ENCODE measurements at regions of chr16 and their contacts with region 1.

Region 1: DNA sequence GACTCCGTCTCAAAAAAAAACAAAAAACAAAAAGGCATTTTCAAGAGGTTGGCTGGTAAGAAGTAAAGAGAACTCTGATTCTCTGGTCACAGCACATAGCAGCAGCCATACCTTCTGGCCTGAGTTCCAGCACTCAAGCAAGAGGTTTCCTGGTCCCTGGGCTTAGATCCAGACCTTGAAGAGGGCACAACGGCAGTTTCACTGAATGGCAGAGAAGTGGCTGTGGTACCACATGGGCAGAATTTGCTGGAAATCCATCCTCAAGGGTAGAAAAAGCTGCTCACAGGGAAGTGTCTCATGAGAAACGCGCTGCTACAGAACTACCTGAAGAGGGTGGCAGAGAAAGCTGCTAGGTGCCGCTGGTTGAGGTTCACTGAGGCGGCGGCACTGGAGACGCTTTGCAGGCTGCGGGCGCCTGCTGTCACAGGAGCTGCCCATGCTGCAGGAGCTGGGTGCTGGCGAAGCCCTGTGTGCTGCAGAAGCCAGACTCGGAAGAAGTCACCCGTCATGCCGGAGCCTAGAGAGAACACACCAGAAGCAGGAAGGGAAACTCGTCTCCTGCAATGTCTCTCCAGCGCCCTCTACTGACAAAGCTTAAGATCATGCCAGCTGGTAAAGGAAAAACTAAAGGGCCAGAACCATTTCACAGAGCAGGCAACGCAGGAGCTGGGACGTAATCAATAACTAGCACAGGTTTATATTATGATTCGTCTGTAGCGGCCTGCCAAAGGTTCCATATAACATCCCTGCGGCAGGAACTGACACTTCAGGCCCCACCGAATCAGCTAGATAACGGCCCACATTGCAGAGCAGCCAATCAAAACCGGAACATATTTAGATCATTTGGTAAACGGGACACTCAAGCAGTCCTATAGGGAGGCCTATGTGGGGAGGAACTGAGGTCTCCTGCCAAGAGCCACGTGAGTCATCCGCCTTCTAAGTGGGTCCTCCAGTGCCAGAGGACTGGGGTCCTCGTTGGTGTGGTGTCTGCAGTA is 5.4 kb upstream of the ZNF213 start:
- DNase-seq: peak; percentile 62 to 84
- ATAC-seq: peak; percentile 68 to 81 (median 79)
- H3K4me3 ChIP-seq: peak overlapping the region in 9 of 10 donors; percentile 27 to 66 (median 59)
- H3K27ac ChIP-seq: peak overlapping the region in 9 of 10 donors; percentile 57 to 92 (median 80)
- H3K4me1 ChIP-seq: peaks cover 3 to 51% (median 38%) of the 10 kb centered on the region in 9 donors
- H3K27me3 ChIP-seq: no peaks in the 10 kb centered on the region
- CTCF ChIP-seq: peak; percentile 81 to 96 (median 94)

Region 2: DNA sequence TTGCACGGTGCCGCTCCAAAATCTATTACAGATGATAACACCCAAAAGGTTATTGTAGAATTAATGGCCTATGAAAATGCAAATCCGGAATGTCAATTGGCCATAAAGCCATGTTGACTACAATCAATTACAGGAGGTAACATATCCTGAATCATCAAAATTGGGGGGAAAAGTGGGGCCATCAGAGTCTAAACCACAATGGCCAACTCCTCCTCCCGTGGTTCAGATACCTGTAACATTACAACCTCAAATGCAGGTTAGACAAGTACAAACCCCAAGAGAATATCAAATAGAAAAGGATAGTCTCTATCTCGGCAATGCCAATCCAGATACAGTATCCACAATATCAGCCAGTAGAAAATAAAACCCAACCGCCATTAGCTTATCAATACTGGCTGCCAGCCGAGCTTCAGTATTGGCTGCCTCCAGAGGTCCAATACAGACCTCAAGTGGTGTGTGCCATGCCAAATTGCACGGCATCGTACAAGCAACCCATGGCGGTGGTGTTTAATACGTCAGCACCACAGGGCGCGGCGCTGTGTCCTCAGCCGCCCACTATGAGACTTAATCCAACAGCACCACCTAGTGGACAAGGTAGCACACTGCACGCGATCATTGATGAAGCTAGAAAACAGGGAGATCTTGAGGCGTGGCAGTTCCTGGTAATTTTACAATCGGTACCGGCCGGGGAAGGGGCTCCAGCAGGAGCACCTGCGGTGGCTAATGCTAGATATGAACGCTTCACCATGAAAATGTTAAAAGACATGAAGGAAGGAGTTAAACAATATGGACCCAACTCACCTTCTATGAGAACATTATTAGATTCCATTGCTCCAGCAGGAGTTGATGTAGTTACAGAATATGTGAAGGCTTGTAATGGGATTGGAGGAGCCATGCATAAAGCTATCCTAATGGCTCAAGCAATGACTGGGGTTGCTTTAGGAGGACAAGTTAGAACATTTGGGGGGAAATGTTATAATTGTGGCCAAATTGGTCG is 202.5 kb before region 1 on chr16:
- intact Hi-C with region 1: no loop called
- DNase-seq: peak; percentile 82 to 84
- ATAC-seq: peak; percentile 80 to 93 (median 89)
- H3K4me3 ChIP-seq: peak overlapping the region in 6 of 10 donors; percentile 22 to 33 (median 30)
- H3K27ac ChIP-seq: no peak overlapping the region
- H3K4me1 ChIP-seq: peaks cover 0 to 11% (median 9%) of the 10 kb centered on the region in 9 donors
- H3K27me3 ChIP-seq: no peaks in the 10 kb centered on the region
- CTCF ChIP-seq: peak; percentile 93 to 99 (median 95)

Region 3: DNA sequence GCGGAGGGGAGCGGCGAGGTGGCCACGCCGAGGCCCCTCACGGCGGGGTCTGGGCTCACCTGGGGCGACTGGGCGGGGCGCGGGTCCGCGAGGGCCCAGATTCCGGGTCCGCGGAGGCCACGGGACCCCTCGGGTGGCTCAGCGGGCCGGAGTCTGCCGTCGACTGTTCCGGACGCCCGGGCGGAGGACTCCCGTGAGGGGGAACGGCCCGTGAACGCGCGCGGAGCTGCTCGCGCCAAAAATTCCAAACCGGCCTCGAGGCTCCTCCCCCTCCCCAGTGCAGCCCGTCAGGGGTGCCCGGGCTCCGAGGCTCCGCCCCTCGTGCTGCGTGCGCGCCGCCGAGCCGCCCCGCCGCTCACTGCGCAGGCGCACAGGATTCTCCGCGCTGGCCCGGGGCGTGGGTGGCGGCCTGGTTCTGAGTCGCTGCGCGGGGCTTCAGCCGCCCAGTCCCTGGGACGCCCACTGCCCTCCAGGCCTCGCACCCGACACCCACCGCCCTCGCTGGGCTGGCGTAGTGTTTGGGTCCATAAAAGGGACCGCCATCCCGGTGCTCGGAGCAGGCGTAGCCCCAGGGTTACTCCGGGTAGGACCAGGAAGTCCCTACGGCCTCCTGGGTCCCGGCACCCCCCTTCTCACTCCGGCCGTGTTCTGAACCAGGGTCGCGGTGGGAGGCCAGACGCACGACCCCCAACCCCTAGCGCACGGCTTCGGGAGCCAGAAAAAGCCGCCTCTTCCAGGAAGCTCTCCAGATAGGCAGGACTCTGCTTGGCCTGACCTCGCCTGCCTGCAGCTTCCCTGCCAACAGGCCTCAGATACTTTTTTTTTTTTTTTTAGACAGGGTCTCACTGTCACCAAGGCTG is 149.0 kb before region 1 on chr16 and contains the start of gene PKMYT1:
- intact Hi-C with region 1: no loop called
- DNase-seq: peak; percentile 89 to 94
- ATAC-seq: peak; percentile 94 to 98 (median 95)
- H3K4me3 ChIP-seq: peak within 1 kb of the TSS; percentile 54 to 89 (median 80)
- H3K27ac ChIP-seq: peak within 1 kb of the TSS; percentile 9 to 97 (median 88)
- H3K4me1 ChIP-seq: peaks cover 2 to 39% (median 28%) of the 10 kb centered on the region in 9 donors
- H3K27me3 ChIP-seq: peaks cover 0 to 12% (median 7%) of the 10 kb centered on the region in 7 donors
- CTCF ChIP-seq: no peak
- total RNA-seq, gene PKMYT1: 0.34 to 4.2 (median 0.66) TPM in 9 of 10 donors, not detected in the other

Region 4: GRCh38 chr16:3094289-3095027 is 35.0 kb before region 1 on chr16:
- intact Hi-C with region 1: loop called in 1 of 10 experiments (anchors 2 kb)
- DNase-seq: no peak
- ATAC-seq: no peak
- H3K4me3 ChIP-seq: no peak overlapping the region
- H3K27ac ChIP-seq: no peak overlapping the region
- H3K4me1 ChIP-seq: peaks cover 0 to 21% (median 3%) of the 10 kb centered on the region in 9 donors
- H3K27me3 ChIP-seq: peaks cover 0 to 10% (median 6%) of the 10 kb centered on the region in 7 donors
- CTCF ChIP-seq: peak; percentile 19 to 68 (median 49)

Region 5: GRCh38 chr16:3150346-3151218 is 21.1 kb after region 1 on chr16:
- intact Hi-C with region 1: no loop called
- DNase-seq: peak; percentile 93 to 94
- ATAC-seq: peak; percentile 91 to 95 (median 94)
- H3K4me3 ChIP-seq: peak overlapping the region; percentile 53 to 78 (median 70)
- H3K27ac ChIP-seq: peak overlapping the region; percentile 59 to 93 (median 87)
- H3K4me1 ChIP-seq: peaks cover 2 to 38% (median 21%) of the 10 kb centered on the region in 9 donors
- H3K27me3 ChIP-seq: peaks cover 0 to 14% (median 0%) of the 10 kb centered on the region in 7 donors
- CTCF ChIP-seq: no peak